ENCODE measurements at regions of chr5 and their contacts with region 1.

Region 1: GRCh38 chr5:173887610-173888472 is at the start of gene CPEB4:
- DNase-seq: peak; percentile 99
- H3K4me3 ChIP-seq: peak within 1 kb of the TSS; percentile 70 to 92 (median 73)
- H3K27ac ChIP-seq: peak within 1 kb of the TSS; percentile 92
- H3K4me1 ChIP-seq: peaks cover 22% of the 10 kb centered on the region
- H3K27me3 ChIP-seq: no peaks in the 10 kb centered on the region
- CTCF ChIP-seq: no peak
- total RNA-seq, gene CPEB4: 29.1 to 44.5 TPM

Region 2: GRCh38 chr5:173714551-173715428 is 173.1 kb before region 1 on chr5:
- CTCF ChIA-PET with region 1: no interaction called
- dilution Hi-C with region 1: no loop called
- in situ Hi-C with region 1: no loop called
- intact Hi-C with region 1: loop called (anchors 5 kb)
- DNase-seq: peak; percentile 87
- H3K4me3 ChIP-seq: no peak overlapping the region
- H3K27ac ChIP-seq: no peak overlapping the region
- H3K4me1 ChIP-seq: peaks cover 15% of the 10 kb centered on the region
- H3K27me3 ChIP-seq: no peaks in the 10 kb centered on the region
- CTCF ChIP-seq: no peak

Region 3: DNA sequence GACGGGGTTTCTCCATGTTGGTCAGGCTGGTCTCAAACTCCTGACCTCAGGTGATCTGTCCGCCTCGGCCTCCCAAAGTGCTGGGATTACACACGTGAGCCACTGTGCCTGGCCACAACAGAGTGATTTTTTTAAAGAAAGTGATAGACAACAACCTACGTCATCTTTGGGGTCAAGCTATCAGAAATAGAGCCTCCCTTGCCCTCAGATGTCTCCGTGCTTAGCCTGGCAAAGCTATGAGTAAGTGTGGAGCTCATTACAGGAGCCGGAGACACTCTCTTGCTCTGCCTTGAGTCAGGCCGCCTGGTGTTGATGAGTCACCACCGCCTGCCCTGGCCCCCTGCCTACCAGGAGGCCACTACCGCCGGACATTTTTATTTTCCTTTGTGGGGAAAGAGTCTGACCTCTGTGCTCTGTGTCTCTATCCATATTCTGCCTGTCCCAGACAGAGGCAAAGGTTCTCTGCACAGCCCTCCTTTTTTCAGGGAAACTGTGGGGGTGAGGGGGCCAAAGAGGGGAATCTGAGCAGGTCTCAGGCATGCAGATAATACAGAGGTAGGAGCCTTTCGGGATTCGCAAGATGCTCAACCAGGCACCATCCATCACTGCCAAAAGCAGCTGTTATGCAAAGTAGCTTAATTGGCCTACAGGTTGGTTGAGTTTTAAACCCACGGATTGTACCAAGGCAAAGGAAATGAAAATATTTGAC is 123.4 kb before region 1 on chr5:
- CTCF ChIA-PET with region 1: no interaction called
- dilution Hi-C with region 1: no loop called
- in situ Hi-C with region 1: loop called in 1 of 2 experiments (anchors 5 kb)
- intact Hi-C with region 1: loop called (anchors 1 kb)
- DNase-seq: peak; percentile 92
- H3K4me3 ChIP-seq: no peak overlapping the region
- H3K27ac ChIP-seq: peak overlapping the region; percentile 17
- H3K4me1 ChIP-seq: peaks cover 19% of the 10 kb centered on the region
- H3K27me3 ChIP-seq: no peaks in the 10 kb centered on the region
- CTCF ChIP-seq: no peak

Region 4: GRCh38 chr5:173781814-173782670 is 105.8 kb before region 1 on chr5:
- CTCF ChIA-PET with region 1: no interaction called
- dilution Hi-C with region 1: no loop called
- in situ Hi-C with region 1: no loop called
- intact Hi-C with region 1: loop called (anchors 5 kb)
- DNase-seq: peak; percentile 86
- H3K4me3 ChIP-seq: no peak overlapping the region
- H3K27ac ChIP-seq: peak overlapping the region; percentile 82
- H3K4me1 ChIP-seq: peaks cover 16% of the 10 kb centered on the region
- H3K27me3 ChIP-seq: no peaks in the 10 kb centered on the region
- CTCF ChIP-seq: no peak

Region 5: GRCh38 chr5:173917788-173918786 is 30.2 kb after region 1 on chr5:
- CTCF ChIA-PET with region 1: interaction called, 3 read pairs
- dilution Hi-C with region 1: no loop called
- in situ Hi-C with region 1: no loop called
- intact Hi-C with region 1: loop called (anchors 1 kb)
- DNase-seq: peak; percentile 85
- H3K4me3 ChIP-seq: peak overlapping the region; percentile 45 to 75 (median 52)
- H3K27ac ChIP-seq: peak overlapping the region; percentile 97
- H3K4me1 ChIP-seq: peaks cover 16% of the 10 kb centered on the region
- H3K27me3 ChIP-seq: no peaks in the 10 kb centered on the region
- CTCF ChIP-seq: peak in 1 of 2 donors; percentile 37

Region 6: DNA sequence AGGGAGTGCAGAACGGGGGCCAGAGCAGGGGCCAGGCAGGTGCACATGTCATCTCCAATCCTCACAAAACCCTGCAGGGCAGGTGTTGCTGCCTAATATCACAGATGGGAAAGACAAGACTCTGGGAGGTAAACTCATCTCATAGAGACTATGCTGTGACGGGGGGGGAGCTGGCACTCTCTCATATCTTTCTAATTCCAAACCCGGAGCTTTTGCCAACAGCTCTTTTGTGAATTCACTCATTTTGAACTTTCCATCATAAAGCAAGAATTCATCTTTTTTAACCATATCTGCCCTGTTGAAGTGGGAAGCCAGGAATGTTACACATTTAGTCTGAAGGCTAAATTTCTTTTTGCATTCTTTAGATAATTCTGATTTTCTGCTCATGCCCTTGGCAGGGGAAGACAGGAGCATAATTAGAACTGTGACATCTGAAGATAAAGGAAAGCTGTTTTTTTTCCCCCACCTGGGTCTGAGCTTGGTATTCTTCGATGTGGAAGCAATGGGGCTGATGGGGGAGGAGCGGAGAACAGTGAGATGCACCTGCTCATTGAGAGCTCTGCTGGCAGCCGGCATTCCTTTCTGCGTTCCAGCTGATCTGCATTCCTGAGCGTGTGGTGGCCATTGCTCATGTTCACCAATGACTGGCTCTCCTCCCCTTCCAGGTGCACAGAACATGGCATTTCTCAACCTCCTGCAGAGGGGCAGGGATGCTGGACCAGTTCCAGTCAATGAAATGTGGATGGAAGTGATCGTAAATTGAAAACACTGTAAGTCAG is 316.9 kb after region 1 on chr5:
- CTCF ChIA-PET with region 1: no interaction called
- dilution Hi-C with region 1: no loop called
- in situ Hi-C with region 1: no loop called
- intact Hi-C with region 1: no loop called
- DNase-seq: peak; percentile 1
- H3K4me3 ChIP-seq: no peak overlapping the region
- H3K27ac ChIP-seq: no peak overlapping the region
- H3K4me1 ChIP-seq: no peaks in the 10 kb centered on the region
- H3K27me3 ChIP-seq: no peaks in the 10 kb centered on the region
- CTCF ChIP-seq: no peak

Measured in mammary epithelial cell (primary cell).